Panc1 (cell line): ENCODE measurements at regions of chr19 and their contacts with region 1.

Region 1: GRCh38 chr19:39445265-39446111 is at the start of gene SUPT5H:
- DNase-seq: peak; percentile 100
- ATAC-seq: peak; percentile 94
- H3K4me3 ChIP-seq: peak within 1 kb of the TSS; percentile 34 to 56
- H3K27ac ChIP-seq: peak within 1 kb of the TSS; percentile 85
- H3K4me1 ChIP-seq: peaks cover 32% of the 10 kb centered on the region
- H3K27me3 ChIP-seq: no peaks in the 10 kb centered on the region
- CTCF ChIP-seq: no peak
- total RNA-seq, gene SUPT5H: 1,614 TPM

Region 2: GRCh38 chr19:39110263-39110967 is 335.1 kb before region 1 on chr19:
- CTCF ChIA-PET with region 1: no interaction called
- POLR2A ChIA-PET with region 1: no interaction called
- in situ Hi-C with region 1: no loop called
- intact Hi-C with region 1: no loop called
- DNase-seq: peak; percentile 75
- ATAC-seq: peak; percentile 83
- H3K4me3 ChIP-seq: no peak overlapping the region
- H3K27ac ChIP-seq: peak overlapping the region; percentile 24; the same call in 1 of the 2 replicates
- H3K4me1 ChIP-seq: peaks cover 16% of the 10 kb centered on the region
- H3K27me3 ChIP-seq: no peaks in the 10 kb centered on the region
- CTCF ChIP-seq: peak; percentile 100

Region 3: DNA sequence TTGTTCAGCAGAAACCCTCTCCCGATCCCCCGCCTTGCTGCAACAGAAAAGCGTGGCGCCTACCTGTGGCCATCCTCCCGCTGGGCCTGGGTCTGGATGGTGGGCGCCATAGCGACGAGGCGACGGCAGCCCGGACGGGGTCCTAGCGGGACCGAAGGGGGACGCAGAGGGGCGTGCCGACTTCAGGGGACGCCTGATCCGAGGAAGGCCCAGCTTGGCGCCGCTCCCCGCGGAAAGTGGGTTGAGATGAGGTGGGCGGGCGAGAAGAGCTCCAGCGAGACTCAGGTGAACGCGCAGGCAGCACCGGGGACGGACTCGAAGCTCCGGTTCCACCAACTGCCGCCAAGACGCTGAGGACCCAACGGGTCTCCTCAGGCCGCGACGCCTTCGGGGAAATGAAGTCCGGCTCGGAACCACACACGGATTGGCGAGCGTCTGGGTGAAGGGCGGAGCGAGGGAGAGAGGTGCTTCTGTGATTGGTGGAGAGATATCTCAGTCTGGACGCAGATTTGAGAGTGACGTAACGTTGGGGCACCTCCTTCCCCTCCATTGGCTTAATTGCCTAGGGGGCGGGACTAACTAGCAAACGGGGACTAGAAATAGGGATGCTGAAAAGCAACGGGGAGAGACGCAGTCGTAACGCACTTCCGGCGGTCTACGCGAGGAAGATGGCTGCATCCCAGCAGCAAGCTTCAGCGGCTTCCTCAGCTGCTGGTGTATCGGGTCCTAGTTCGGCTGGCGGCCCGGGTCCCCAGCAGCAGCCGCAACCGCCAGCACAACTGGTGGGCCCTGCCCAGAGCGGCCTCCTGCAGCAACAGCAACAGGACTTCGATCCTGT is 54.5 kb before region 1 on chr19 and contains the starts of genes MED29 and PAF1:
- CTCF ChIA-PET with region 1: interaction called, 9 read pairs
- POLR2A ChIA-PET with region 1: interaction called, 10 read pairs
- in situ Hi-C with region 1: no loop called
- intact Hi-C with region 1: no loop called
- DNase-seq: peak; percentile 100
- ATAC-seq: peak; percentile 96
- H3K4me3 ChIP-seq: peak within 1 kb of the TSS; percentile 39 to 51
- H3K27ac ChIP-seq: peak within 1 kb of the TSS; percentile 86
- H3K4me1 ChIP-seq: peaks cover 24% of the 10 kb centered on the region
- H3K27me3 ChIP-seq: no peaks in the 10 kb centered on the region
- CTCF ChIP-seq: no peak
- total RNA-seq, gene MED29: 739 TPM
- total RNA-seq, gene PAF1: 901 TPM

Region 4: GRCh38 chr19:39428283-39429112 is 17.0 kb before region 1 on chr19:
- CTCF ChIA-PET with region 1: interaction called, 64 read pairs
- POLR2A ChIA-PET with region 1: interaction called, 254 read pairs
- in situ Hi-C with region 1: no loop called
- intact Hi-C with region 1: no loop called
- DNase-seq: peak; percentile 92
- ATAC-seq: peak; percentile 70
- H3K4me3 ChIP-seq: peak overlapping the region; percentile 0 to 17; a peak in 3 of 4 replicates
- H3K27ac ChIP-seq: peak overlapping the region; percentile 86
- H3K4me1 ChIP-seq: peaks cover 75% of the 10 kb centered on the region
- H3K27me3 ChIP-seq: no peaks in the 10 kb centered on the region
- CTCF ChIP-seq: no peak

Region 5: GRCh38 chr19:39494661-39495060 is 49.2 kb after region 1 on chr19:
- CTCF ChIA-PET with region 1: interaction called, 104 read pairs
- POLR2A ChIA-PET with region 1: interaction called, 21 read pairs
- in situ Hi-C with region 1: no loop called
- intact Hi-C with region 1: loop called (anchors 2 kb)
- DNase-seq: no peak
- ATAC-seq: no peak
- H3K4me3 ChIP-seq: no peak overlapping the region
- H3K27ac ChIP-seq: no peak overlapping the region
- H3K4me1 ChIP-seq: peaks cover 20% of the 10 kb centered on the region
- H3K27me3 ChIP-seq: peaks cover 4% of the 10 kb centered on the region
- CTCF ChIP-seq: no peak

Region 6: DNA sequence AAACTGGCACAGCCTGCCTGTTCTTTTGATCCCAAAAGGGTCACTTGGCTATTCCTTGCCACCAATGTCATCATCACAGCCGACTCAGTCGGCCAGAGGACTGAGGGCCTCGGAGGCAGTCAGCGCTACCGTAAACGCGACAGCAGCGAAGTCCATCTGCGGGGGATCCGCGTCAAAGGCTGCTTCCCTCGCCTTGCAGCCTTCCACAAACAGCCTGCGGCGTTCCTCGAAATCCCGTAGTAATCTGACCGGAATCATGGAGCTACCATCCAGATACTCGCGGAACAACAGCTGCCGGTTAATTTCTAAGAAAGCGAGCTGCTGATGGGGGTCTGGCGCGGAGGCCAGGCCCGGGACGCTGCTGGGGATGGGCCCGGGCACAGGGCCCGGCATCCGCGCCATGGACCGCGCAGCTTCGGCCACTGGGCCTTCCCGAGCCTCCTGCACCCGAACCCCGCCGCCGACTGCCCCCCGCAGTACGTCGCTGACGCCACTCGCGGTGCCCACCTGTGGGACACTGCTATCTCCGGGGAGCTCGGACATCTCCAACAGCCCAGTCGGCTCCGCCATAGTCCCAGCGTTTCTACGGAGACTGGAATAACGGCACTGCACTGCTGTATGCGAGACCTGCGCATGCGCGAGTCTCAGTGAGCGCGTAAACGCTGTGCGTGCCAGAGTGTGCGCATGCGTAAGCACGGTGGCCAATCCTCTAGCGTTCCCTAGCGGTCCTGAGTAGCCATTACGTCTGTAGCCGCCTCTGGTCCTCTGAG is 86.9 kb after region 1 on chr19 and contains the start of gene EID2B:
- CTCF ChIA-PET with region 1: interaction called, 193 read pairs
- POLR2A ChIA-PET with region 1: interaction called, 45 read pairs
- in situ Hi-C with region 1: no loop called
- intact Hi-C with region 1: loop called (anchors 1 kb)
- DNase-seq: peak; percentile 100
- ATAC-seq: peak; percentile 95
- H3K4me3 ChIP-seq: peak within 1 kb of the TSS; percentile 35 to 56
- H3K27ac ChIP-seq: peak within 1 kb of the TSS; percentile 80
- H3K4me1 ChIP-seq: peaks cover 25% of the 10 kb centered on the region
- H3K27me3 ChIP-seq: no peaks in the 10 kb centered on the region
- CTCF ChIP-seq: no peak
- total RNA-seq, gene EID2B: 37.7 TPM

Region 7: DNA sequence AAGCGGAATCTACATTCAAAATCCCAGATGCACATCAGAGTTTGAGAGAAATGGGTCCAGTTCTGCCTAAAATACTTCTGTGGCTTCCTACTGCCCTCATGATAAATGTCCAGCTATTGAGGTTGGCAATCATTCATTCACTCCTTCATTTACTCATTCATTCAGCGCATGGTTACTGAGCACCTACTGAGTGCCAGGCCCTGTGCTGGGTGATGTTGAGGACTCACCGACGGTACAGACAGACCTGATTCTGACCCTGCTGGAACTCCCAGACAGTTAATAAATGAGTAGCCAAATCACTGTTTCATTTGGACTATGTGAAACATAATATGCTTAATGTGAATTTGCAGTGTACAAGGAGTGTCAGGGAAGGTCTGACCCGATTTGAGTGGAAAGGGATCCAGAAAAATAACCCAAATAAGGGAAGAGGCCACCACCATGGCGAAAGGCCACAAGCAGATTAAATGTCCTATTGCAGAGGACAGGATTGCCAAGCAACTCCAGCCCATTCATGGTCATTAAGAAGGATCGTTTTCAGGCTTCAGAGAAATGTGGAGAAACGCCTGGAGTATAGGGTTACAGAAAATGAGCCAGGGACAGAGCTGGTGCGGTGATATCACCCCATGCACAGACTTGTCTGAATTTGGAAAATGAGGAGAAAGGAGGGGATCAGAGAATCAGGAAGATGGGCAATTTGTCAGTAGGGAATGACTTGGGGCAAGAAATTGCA is 367.9 kb after region 1 on chr19:
- CTCF ChIA-PET with region 1: interaction called, 14 read pairs
- POLR2A ChIA-PET with region 1: no interaction called
- in situ Hi-C with region 1: no loop called
- intact Hi-C with region 1: no loop called
- DNase-seq: no peak
- ATAC-seq: peak; percentile 5; the same call in 1 of the 2 replicates
- H3K4me3 ChIP-seq: no peak overlapping the region
- H3K27ac ChIP-seq: no peak overlapping the region
- H3K4me1 ChIP-seq: no peaks in the 10 kb centered on the region
- H3K27me3 ChIP-seq: no peaks in the 10 kb centered on the region
- CTCF ChIP-seq: no peak

Region 8: GRCh38 chr19:40279120-40279551 is 833.6 kb after region 1 on chr19:
- CTCF ChIA-PET with region 1: no interaction called
- POLR2A ChIA-PET with region 1: interaction called, 12 read pairs
- in situ Hi-C with region 1: no loop called
- intact Hi-C with region 1: no loop called
- DNase-seq: no peak
- ATAC-seq: no peak
- H3K4me3 ChIP-seq: no peak overlapping the region
- H3K27ac ChIP-seq: no peak overlapping the region
- H3K4me1 ChIP-seq: peaks cover 67% of the 10 kb centered on the region
- H3K27me3 ChIP-seq: no peaks in the 10 kb centered on the region
- CTCF ChIP-seq: no peak